ENCODE measurements at regions of chr2 and their contacts with region 1.

Region 1: GRCh38 chr2:165698444-165698894 is 95.6 kb downstream of the GALNT3 start:
- DNase-seq: no peak
- H3K4me3 ChIP-seq: no peak overlapping the region
- H3K27ac ChIP-seq: no peak overlapping the region
- H3K4me1 ChIP-seq: no peaks in the 10 kb centered on the region
- H3K27me3 ChIP-seq: no peaks in the 10 kb centered on the region
- CTCF ChIP-seq: peak in 2 of 3 experiments; percentile 30 to 31
- POLR2A ChIP-seq: no peak

Region 2: DNA sequence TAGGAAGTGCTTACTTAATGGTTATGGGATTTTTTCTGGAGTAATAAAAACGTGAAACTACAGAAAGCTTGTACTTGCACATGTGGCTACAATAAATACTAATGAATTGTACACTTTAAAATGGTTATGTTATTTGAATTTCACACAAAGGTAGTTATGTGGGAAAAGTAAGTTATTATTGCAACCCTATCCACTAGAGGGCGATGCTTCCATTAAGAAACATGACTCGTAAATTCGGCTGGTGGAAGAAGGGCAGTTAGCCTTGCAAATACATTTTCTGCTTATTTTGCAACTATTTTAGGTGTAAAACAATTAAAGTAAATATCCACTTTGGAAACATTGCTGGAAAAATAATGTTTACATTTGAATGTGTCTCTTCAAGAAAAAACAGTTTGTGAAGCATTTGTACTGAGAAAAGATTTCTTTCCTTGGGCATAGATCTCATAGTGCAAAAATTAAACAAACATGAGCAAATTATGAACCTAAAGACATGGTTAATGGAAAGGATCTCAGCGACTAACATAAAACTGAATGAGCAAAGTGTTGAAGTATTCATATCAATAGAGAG is 297.1 kb before region 1 on chr2:
- intact Hi-C with region 1: loop called (anchors 10 kb)
- DNase-seq: no peak
- H3K4me3 ChIP-seq: no peak overlapping the region
- H3K27ac ChIP-seq: no peak overlapping the region
- H3K4me1 ChIP-seq: no peaks in the 10 kb centered on the region
- H3K27me3 ChIP-seq: no peaks in the 10 kb centered on the region
- CTCF ChIP-seq: peak; percentile 34 to 81 (median 51)
- POLR2A ChIP-seq: no peak

Measured in vagina (tissue), 2 donors.